Dorsolateral prefrontal cortex (tissue), 120 donors: ENCODE measurements at regions of chr3 and their contacts with region 1.

Region 1: GRCh38 chr3:181210275-181210674 is 220.7 kb upstream of the DNAJC19 start:
- DNase-seq: no peak
- H3K4me3 ChIP-seq: peak overlapping the region in 20 of 59 donors; percentile 1 to 48 (median 21)
- H3K27ac ChIP-seq: no peak overlapping the region
- H3K27me3 ChIP-seq: peaks cover 0 to 7% (median 0%) of the 10 kb centered on the region in 45 donors
- CTCF ChIP-seq: peak; percentile 33 to 89 (median 73)

Region 2: DNA sequence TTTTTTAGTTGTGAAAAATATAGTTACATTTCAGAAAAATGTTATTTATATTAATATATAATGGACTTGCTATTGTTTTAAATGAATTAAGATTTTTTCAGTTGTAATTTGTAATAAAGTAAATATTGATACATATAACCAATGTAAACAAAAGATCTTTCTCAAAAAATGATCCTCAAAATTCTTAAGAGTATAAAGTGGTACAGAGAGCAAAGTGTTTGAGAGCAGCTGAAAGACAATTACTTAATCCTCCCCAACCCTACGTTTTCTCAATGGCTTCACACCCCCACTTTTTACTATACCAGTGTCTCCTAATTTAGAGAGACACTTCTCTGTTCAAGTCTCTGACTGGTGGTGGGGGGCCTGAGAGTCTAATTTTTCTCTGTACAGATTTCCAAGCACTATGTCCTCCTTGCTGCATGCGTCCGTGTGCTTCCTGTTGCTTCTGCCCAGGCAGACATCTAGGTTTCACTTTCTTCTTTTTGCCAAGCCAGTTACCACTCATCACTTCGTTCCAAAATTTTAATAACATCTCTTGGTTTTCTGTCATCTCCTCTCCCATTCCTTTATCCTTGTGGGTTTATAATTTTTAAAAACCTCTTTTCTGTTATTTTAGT is 55.5 kb after region 1 on chr3:
- intact Hi-C with region 1: loop called in 1 of 2 experiments (anchors 10 kb)
- DNase-seq: no peak
- H3K4me3 ChIP-seq: peak overlapping the region in 58 of 59 donors; percentile 22 to 69 (median 48)
- H3K27ac ChIP-seq: peak overlapping the region in 3 of 59 donors; percentile 10 to 31 (median 21)
- H3K27me3 ChIP-seq: no peaks in the 10 kb centered on the region
- CTCF ChIP-seq: no peak

Region 3: GRCh38 chr3:181403876-181404660 is 193.8 kb after region 1 on chr3:
- intact Hi-C with region 1: no loop called
- DNase-seq: no peak
- H3K4me3 ChIP-seq: no peak overlapping the region
- H3K27ac ChIP-seq: no peak overlapping the region
- H3K27me3 ChIP-seq: no peaks in the 10 kb centered on the region
- CTCF ChIP-seq: no peak

Region 4: GRCh38 chr3:181442066-181442465 is 231.8 kb after region 1 on chr3:
- intact Hi-C with region 1: loop called in 1 of 2 experiments (anchors 10 kb)
- DNase-seq: no peak
- H3K4me3 ChIP-seq: peak overlapping the region in 36 of 59 donors; percentile 1 to 51 (median 34)
- H3K27ac ChIP-seq: peak overlapping the region in 21 of 59 donors; percentile 4 to 68 (median 42)
- H3K27me3 ChIP-seq: no peaks in the 10 kb centered on the region
- CTCF ChIP-seq: no peak

Region 5: GRCh38 chr3:182618085-182618732 is 1407.9 kb after region 1 on chr3:
- intact Hi-C with region 1: loop called in 1 of 2 experiments (anchors 10 kb)
- DNase-seq: peak in 1 of 10 donors; percentile 20
- H3K4me3 ChIP-seq: peak overlapping the region in 37 of 59 donors; percentile 4 to 58 (median 26)
- H3K27ac ChIP-seq: peak overlapping the region in 6 of 59 donors; percentile 2 to 64 (median 24)
- H3K27me3 ChIP-seq: no peaks in the 10 kb centered on the region
- CTCF ChIP-seq: peak; percentile 34 to 88 (median 67)